ENCODE measurements at regions of chr15 and their contacts with region 1.

Region 1: GRCh38 chr15:73908030-73908821 is 18.0 kb upstream of the LOXL1 start:
- DNase-seq: peak; percentile 93
- H3K4me3 Mint-ChIP-seq: no peak overlapping the region
- H3K27ac Mint-ChIP-seq: no peak overlapping the region
- H3K4me1 Mint-ChIP-seq: peaks cover 9% of the 10 kb centered on the region
- H3K27me3 Mint-ChIP-seq: no peaks in the 10 kb centered on the region

Region 2: DNA sequence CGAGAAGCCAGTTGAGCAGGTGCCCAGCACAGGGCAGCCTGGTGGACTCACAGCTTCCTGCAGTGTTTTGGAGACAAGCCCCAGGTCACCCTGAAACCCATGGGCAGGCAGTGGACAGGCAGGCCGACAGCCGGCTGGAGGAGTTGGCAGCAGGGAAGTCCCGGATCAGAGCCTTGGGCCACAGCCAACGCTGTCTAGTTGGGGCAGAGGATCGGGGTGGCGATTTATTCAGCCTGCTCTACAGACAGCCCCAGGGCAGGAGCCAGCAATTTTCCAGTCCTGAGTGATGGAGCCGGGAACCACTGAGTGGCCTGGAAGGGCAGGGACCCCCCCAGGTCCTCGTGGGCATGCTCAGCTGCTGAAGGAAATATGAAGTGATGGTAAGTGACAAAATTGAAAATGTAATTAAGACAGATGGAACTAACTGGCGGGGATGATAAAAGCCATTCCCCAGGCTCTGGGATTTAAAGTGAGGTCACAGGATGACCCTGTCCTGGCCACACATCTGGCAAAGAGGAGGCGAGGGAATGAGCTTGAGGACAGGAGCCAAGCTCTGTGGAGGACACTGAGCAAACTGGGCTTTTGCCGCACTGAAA is 69.3 kb before region 1 on chr15:
- intact Hi-C with region 1: no loop called
- DNase-seq: no peak
- H3K4me3 Mint-ChIP-seq: no peak overlapping the region
- H3K27ac Mint-ChIP-seq: no peak overlapping the region
- H3K4me1 Mint-ChIP-seq: no peaks in the 10 kb centered on the region
- H3K27me3 Mint-ChIP-seq: peaks cover 11% of the 10 kb centered on the region

Region 3: GRCh38 chr15:73873889-73874511 is 34.2 kb before region 1 on chr15:
- intact Hi-C with region 1: loop called (anchors 1 kb)
- DNase-seq: peak; percentile 80
- H3K4me3 Mint-ChIP-seq: no peak overlapping the region
- H3K27ac Mint-ChIP-seq: no peak overlapping the region
- H3K4me1 Mint-ChIP-seq: no peaks in the 10 kb centered on the region
- H3K27me3 Mint-ChIP-seq: peaks cover 53% of the 10 kb centered on the region

Region 4: DNA sequence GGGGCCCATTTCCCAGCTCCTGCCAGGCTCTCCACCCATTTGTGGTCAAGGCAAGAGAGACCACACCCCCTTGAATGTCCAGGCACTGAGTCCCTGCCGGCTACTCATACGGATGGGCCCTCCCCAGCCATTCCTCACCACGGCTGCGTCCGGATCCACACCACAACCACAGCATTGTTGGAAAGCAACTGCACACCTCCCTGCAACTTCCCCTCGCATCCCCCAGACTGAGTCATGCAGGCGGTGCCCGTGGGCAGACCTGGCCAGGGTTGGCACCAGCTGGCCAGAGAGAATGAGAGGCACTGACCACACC is 48.5 kb after region 1 on chr15:
- intact Hi-C with region 1: no loop called
- DNase-seq: no peak
- H3K4me3 Mint-ChIP-seq: no peak overlapping the region
- H3K27ac Mint-ChIP-seq: no peak overlapping the region
- H3K4me1 Mint-ChIP-seq: peaks cover 29% of the 10 kb centered on the region
- H3K27me3 Mint-ChIP-seq: no peaks in the 10 kb centered on the region